ENCODE measurements at regions of chr19 and their contacts with region 1.

Region 1: GRCh38 chr19:23470873-23471545 is 75.7 kb upstream of the ZNF91 start:
- DNase-seq: no peak
- H3K4me3 ChIP-seq: no peak overlapping the region
- H3K4me1 ChIP-seq: no peaks in the 10 kb centered on the region
- H3K27me3 ChIP-seq: no peaks in the 10 kb centered on the region

Region 2: DNA sequence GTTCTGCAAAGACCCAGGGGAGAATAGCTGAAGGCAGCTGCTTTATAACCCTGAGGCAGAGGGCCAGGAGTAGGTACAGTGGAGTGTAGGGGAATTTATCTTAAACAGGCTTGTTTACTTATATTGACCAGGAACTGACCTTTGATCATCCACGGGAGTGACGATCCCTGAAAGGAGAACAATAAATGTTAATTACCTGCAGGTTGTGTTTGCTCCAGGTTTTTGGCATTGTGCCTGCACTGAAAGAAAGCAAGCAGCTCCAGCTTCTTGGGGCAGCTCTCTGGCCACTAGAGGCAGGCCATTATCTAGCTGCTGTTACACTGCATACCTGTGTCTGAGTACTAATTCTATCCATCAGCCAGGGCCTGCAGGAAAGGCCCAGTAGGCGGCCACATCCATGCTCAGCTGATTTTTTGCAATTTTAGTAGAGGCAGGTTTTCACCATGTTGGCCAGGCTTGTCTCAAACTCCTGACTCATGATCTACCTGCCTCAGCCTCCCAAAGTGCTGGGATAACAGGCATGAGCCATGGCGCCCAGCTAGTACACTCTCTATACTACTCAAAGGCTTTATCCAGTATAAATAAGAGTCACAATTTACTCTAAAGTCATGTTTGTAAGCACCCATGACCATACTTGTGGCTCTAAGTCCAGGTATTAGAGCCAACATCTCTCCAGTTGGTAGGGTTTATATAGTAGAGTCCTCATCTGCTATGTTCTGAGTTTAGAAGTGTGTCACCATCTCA is 67.3 kb before region 1 on chr19:
- in situ Hi-C with region 1: no loop called
- DNase-seq: no peak
- H3K4me3 ChIP-seq: no peak overlapping the region
- H3K4me1 ChIP-seq: no peaks in the 10 kb centered on the region
- H3K27me3 ChIP-seq: no peaks in the 10 kb centered on the region

Region 3: GRCh38 chr19:23787106-23787505 is 316.1 kb after region 1 on chr19:
- in situ Hi-C with region 1: no loop called
- DNase-seq: no peak
- H3K4me3 ChIP-seq: no peak overlapping the region
- H3K4me1 ChIP-seq: no peaks in the 10 kb centered on the region
- H3K27me3 ChIP-seq: no peaks in the 10 kb centered on the region

Region 4: GRCh38 chr19:23971598-23971997 is 500.6 kb after region 1 on chr19:
- in situ Hi-C with region 1: loop called (anchors 5 kb)
- DNase-seq: no peak
- H3K4me3 ChIP-seq: no peak overlapping the region
- H3K4me1 ChIP-seq: no peaks in the 10 kb centered on the region
- H3K27me3 ChIP-seq: no peaks in the 10 kb centered on the region